Endothelial cell of umbilical vein (primary cell): ENCODE measurements at regions of chr17 and their contacts with region 1.

Region 1: GRCh38 chr17:3048767-3049471 is 14.5 kb downstream of the OR1D5 start:
- DNase-seq: peak; percentile 99
- H3K4me3 ChIP-seq: peak overlapping the region; percentile 44 to 75 (median 72)
- H3K27ac ChIP-seq: no peak overlapping the region
- H3K4me1 ChIP-seq: no peaks in the 10 kb centered on the region
- H3K27me3 ChIP-seq: no peaks in the 10 kb centered on the region
- CTCF ChIP-seq: peak; percentile 74 to 86
- POLR2A ChIP-seq: peak; percentile 70

Region 2: DNA sequence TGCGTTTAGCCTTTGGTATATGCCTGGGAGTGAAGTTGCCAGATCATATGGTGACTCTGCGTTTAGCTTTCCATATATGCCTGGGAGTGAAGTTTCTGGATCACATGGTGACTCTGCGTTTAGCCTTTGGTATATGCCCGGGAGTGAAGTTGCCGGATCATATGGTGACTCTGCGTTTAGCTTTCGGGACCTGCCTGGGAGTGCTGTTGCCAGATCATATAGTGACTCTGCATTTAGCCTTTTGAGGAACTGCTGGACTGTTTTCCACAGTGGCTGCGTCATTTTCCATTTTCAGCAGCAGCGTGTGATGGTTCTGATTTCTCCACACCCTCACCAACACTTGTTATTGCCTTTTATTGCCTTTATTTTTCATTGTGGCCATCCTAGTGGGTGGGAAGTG is 58.5 kb before region 1 on chr17:
- CTCF ChIA-PET with region 1: no interaction called
- POLR2A ChIA-PET with region 1: no interaction called
- dilution Hi-C with region 1: no loop called
- intact Hi-C with region 1: no loop called
- DNase-seq: no peak
- H3K4me3 ChIP-seq: no peak overlapping the region
- H3K27ac ChIP-seq: no peak overlapping the region
- H3K4me1 ChIP-seq: no peaks in the 10 kb centered on the region
- H3K27me3 ChIP-seq: no peaks in the 10 kb centered on the region
- CTCF ChIP-seq: no peak
- POLR2A ChIP-seq: no peak

Region 3: GRCh38 chr17:3020381-3020780 is 28.5 kb before region 1 on chr17:
- CTCF ChIA-PET with region 1: no interaction called
- POLR2A ChIA-PET with region 1: no interaction called
- dilution Hi-C with region 1: no loop called
- intact Hi-C with region 1: no loop called
- DNase-seq: no peak
- H3K4me3 ChIP-seq: no peak overlapping the region
- H3K27ac ChIP-seq: no peak overlapping the region
- H3K4me1 ChIP-seq: no peaks in the 10 kb centered on the region
- H3K27me3 ChIP-seq: no peaks in the 10 kb centered on the region
- CTCF ChIP-seq: no peak
- POLR2A ChIP-seq: no peak

Region 4: GRCh38 chr17:3827124-3827773 is 778.3 kb after region 1 on chr17:
- CTCF ChIA-PET with region 1: interaction called, 7 read pairs
- POLR2A ChIA-PET with region 1: no interaction called
- dilution Hi-C with region 1: no loop called
- intact Hi-C with region 1: loop called (anchors 10 kb)
- DNase-seq: peak; percentile 79
- H3K4me3 ChIP-seq: no peak overlapping the region
- H3K27ac ChIP-seq: no peak overlapping the region
- H3K4me1 ChIP-seq: no peaks in the 10 kb centered on the region
- H3K27me3 ChIP-seq: no peaks in the 10 kb centered on the region
- CTCF ChIP-seq: peak; percentile 64 to 71
- POLR2A ChIP-seq: no peak